ENCODE measurements at regions of chr7 and their contacts with region 1.

Region 1: GRCh38 chr7:94223375-94224070 is 171.2 kb upstream of the COL1A2 start:
- DNase-seq: peak; percentile 32
- ATAC-seq: peak; percentile 45
- H3K4me3 ChIP-seq: no peak overlapping the region
- H3K4me3 Mint-ChIP-seq: no peak overlapping the region
- H3K27ac ChIP-seq: no peak overlapping the region
- H3K27ac Mint-ChIP-seq: no peak overlapping the region
- H3K4me1 ChIP-seq: no peaks in the 10 kb centered on the region
- H3K4me1 Mint-ChIP-seq: no peaks in the 10 kb centered on the region
- H3K27me3 ChIP-seq: peaks cover 0 to 2% (median 0%) of the 10 kb centered on the region in 4 experiments
- H3K27me3 Mint-ChIP-seq: no peaks in the 10 kb centered on the region
- CTCF ChIP-seq: peak; percentile 45

Region 2: GRCh38 chr7:93461350-93461749 is 762.2 kb before region 1 on chr7:
- CTCF ChIA-PET with region 1: no interaction called
- POLR2A ChIA-PET with region 1: no interaction called
- intact Hi-C with region 1: loop called (anchors 5 kb)
- DNase-seq: peak; percentile 21
- ATAC-seq: no peak
- H3K4me3 ChIP-seq: no peak overlapping the region
- H3K4me3 Mint-ChIP-seq: no peak overlapping the region
- H3K27ac ChIP-seq: no peak overlapping the region
- H3K27ac Mint-ChIP-seq: no peak overlapping the region
- H3K4me1 ChIP-seq: no peaks in the 10 kb centered on the region
- H3K4me1 Mint-ChIP-seq: no peaks in the 10 kb centered on the region
- H3K27me3 ChIP-seq: no peaks in the 10 kb centered on the region
- H3K27me3 Mint-ChIP-seq: peaks cover 21% of the 10 kb centered on the region
- CTCF ChIP-seq: peak; percentile 23

Region 3: DNA sequence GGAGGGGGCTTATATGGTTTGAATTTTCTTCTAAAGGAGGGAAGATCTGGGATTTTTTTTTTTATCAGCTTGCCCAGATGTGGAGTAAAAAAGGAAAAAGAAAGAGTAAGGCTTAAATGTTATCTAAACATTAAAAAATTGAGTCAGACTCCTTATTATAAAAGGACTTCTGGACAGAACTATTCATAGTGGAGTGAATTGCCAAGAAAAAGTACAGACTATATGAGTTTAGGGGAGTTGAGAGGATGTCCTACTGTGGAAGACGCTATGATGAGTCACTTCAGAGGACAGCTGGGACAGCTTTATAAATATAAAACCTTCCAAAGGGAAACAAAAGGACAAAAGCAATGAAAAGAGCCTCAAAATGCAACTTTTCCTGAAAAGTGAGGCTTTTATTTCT is 406.0 kb before region 1 on chr7:
- CTCF ChIA-PET with region 1: no interaction called
- POLR2A ChIA-PET with region 1: no interaction called
- intact Hi-C with region 1: loop called (anchors 10 kb)
- DNase-seq: no peak
- ATAC-seq: no peak
- H3K4me3 ChIP-seq: no peak overlapping the region
- H3K4me3 Mint-ChIP-seq: no peak overlapping the region
- H3K27ac ChIP-seq: no peak overlapping the region
- H3K27ac Mint-ChIP-seq: no peak overlapping the region
- H3K4me1 ChIP-seq: no peaks in the 10 kb centered on the region
- H3K4me1 Mint-ChIP-seq: no peaks in the 10 kb centered on the region
- H3K27me3 ChIP-seq: peaks cover 0 to 2% (median 0%) of the 10 kb centered on the region in 4 experiments
- H3K27me3 Mint-ChIP-seq: no peaks in the 10 kb centered on the region
- CTCF ChIP-seq: no peak

Region 4: DNA sequence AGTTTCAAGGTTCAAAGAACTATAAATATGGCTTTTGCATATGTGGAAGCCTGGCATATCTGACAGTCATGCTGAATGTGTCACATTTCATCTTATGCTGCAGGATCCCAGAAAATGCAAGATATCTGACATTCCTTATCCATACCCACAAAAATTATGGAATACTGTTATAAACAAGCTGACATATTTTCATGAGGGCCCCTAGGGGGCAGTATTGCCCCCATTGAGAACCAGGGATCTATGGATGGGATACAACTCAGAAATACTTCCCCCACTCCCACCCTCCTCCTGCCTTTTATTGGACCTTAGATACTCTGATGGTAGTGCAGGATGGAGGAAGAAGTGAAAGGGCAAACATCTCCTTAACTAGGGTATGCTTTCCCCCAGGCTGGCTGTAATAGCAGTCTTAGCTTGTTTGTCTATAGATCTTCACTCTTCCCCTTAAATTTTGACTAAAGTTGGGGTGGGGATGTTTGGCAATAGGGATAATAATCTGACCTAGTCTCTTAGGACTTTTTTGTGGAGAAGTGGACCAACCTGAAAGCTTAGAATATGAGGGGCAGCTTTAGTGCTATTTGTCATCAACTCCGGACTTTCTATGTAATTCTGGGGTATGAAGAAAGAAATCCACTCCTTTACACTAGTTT is 320.6 kb before region 1 on chr7:
- CTCF ChIA-PET with region 1: interaction called, 9 read pairs
- POLR2A ChIA-PET with region 1: no interaction called
- intact Hi-C with region 1: loop called (anchors 1 kb)
- DNase-seq: peak; percentile 66
- ATAC-seq: peak; percentile 41
- H3K4me3 ChIP-seq: no peak overlapping the region
- H3K4me3 Mint-ChIP-seq: no peak overlapping the region
- H3K27ac ChIP-seq: no peak overlapping the region
- H3K27ac Mint-ChIP-seq: no peak overlapping the region
- H3K4me1 ChIP-seq: no peaks in the 10 kb centered on the region
- H3K4me1 Mint-ChIP-seq: no peaks in the 10 kb centered on the region
- H3K27me3 ChIP-seq: no peaks in the 10 kb centered on the region
- H3K27me3 Mint-ChIP-seq: peaks cover 25% of the 10 kb centered on the region
- CTCF ChIP-seq: peak; percentile 80

Region 5: DNA sequence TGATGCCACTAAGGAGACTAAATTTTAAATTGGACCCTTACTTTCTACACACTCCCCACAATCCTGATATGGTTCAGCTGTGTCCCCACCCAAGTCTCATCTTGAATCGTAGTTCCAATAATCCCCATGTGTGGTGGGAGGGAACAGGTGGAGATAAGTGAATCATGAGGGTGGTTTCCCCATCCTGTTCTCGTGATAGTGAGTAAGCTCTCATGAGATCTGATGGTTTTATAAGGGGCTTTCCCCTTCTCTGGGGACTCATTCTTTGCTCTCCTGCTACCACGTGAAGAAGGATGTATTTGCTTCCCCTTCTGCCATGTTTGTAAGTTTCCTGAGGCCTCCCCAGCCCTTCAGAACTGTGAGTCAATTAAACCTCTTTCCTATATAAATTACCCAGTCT is 201.0 kb before region 1 on chr7:
- CTCF ChIA-PET with region 1: no interaction called
- POLR2A ChIA-PET with region 1: no interaction called
- intact Hi-C with region 1: no loop called
- DNase-seq: peak; percentile 70
- ATAC-seq: peak; percentile 82
- H3K4me3 ChIP-seq: no peak overlapping the region
- H3K4me3 Mint-ChIP-seq: peak overlapping the region; percentile 24
- H3K27ac ChIP-seq: peak overlapping the region in 1 of 2 donors; percentile 56
- H3K27ac Mint-ChIP-seq: peak overlapping the region; percentile 69
- H3K4me1 ChIP-seq: peaks cover 0 to 5% of the 10 kb centered on the region in 2 donors
- H3K4me1 Mint-ChIP-seq: peaks cover 10% of the 10 kb centered on the region
- H3K27me3 ChIP-seq: no peaks in the 10 kb centered on the region
- H3K27me3 Mint-ChIP-seq: no peaks in the 10 kb centered on the region
- CTCF ChIP-seq: no peak

Measured in B cell (primary cell).